Endothelial cell of umbilical vein (primary cell): ENCODE measurements at regions of chr15 and their contacts with region 1.

Region 1: GRCh38 chr15:66789029-66790025 is 87.3 kb downstream of the SMAD6 start:
- DNase-seq: peak; percentile 57
- H3K4me3 ChIP-seq: no peak overlapping the region
- H3K27ac ChIP-seq: no peak overlapping the region
- H3K4me1 ChIP-seq: no peaks in the 10 kb centered on the region
- H3K27me3 ChIP-seq: no peaks in the 10 kb centered on the region
- CTCF ChIP-seq: peak; percentile 54 to 67
- POLR2A ChIP-seq: no peak

Region 2: GRCh38 chr15:66429117-66429516 is 360.2 kb before region 1 on chr15:
- CTCF ChIA-PET with region 1: no interaction called
- POLR2A ChIA-PET with region 1: no interaction called
- dilution Hi-C with region 1: no loop called
- intact Hi-C with region 1: no loop called
- DNase-seq: no peak
- H3K4me3 ChIP-seq: no peak overlapping the region
- H3K27ac ChIP-seq: no peak overlapping the region
- H3K4me1 ChIP-seq: no peaks in the 10 kb centered on the region
- H3K27me3 ChIP-seq: no peaks in the 10 kb centered on the region
- CTCF ChIP-seq: no peak
- POLR2A ChIP-seq: no peak

Region 3: GRCh38 chr15:66692808-66693596 is 96.3 kb before region 1 on chr15:
- CTCF ChIA-PET with region 1: no interaction called
- POLR2A ChIA-PET with region 1: no interaction called
- dilution Hi-C with region 1: no loop called
- intact Hi-C with region 1: no loop called
- DNase-seq: no peak
- H3K4me3 ChIP-seq: no peak overlapping the region
- H3K27ac ChIP-seq: no peak overlapping the region
- H3K4me1 ChIP-seq: peaks cover 3% of the 10 kb centered on the region
- H3K27me3 ChIP-seq: no peaks in the 10 kb centered on the region
- CTCF ChIP-seq: no peak
- POLR2A ChIP-seq: no peak

Region 4: DNA sequence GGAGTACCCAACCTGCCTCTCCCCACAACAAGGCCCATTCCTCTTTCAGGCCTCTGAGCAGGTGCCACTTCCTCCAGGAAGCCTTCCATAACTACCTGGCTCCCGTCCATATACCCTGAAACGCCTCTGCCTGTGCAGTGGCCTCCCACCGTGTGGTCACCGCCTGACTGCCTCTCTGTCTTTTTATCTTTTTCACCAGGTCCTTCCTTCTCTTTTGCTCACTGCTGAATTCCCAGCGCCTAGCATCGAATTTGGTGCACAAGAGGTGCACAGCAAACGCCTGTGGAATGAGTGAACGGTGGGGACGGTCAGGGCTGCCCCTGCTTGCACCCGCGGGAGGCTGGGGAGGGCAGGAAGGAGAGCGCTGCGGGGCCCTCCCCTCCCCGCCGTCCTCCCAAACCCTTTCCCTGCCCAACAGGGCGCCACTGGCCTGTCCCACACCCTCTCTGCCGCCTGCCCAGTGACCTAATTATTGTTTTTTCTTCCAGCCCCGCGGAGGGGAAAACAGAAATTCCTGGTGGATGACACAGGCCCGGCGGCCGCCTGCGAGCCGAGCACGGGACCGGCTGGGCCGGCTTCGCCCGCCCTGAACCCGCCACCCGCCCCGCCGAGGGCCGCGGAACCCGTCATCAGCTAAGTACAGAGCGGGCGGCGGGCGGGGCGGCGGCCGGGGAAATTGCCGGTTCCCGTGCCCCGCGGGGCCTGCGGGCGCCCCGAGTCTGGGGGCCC is 52.8 kb after region 1 on chr15:
- CTCF ChIA-PET with region 1: interaction called, 223 read pairs
- POLR2A ChIA-PET with region 1: no interaction called
- dilution Hi-C with region 1: no loop called
- intact Hi-C with region 1: loop called (anchors 1 kb)
- DNase-seq: peak; percentile 93
- H3K4me3 ChIP-seq: peak overlapping the region in 2 of 3 experiments; percentile 45 to 50
- H3K27ac ChIP-seq: peak overlapping the region; percentile 89
- H3K4me1 ChIP-seq: peaks cover 15% of the 10 kb centered on the region
- H3K27me3 ChIP-seq: no peaks in the 10 kb centered on the region
- CTCF ChIP-seq: no peak
- POLR2A ChIP-seq: no peak

Region 5: DNA sequence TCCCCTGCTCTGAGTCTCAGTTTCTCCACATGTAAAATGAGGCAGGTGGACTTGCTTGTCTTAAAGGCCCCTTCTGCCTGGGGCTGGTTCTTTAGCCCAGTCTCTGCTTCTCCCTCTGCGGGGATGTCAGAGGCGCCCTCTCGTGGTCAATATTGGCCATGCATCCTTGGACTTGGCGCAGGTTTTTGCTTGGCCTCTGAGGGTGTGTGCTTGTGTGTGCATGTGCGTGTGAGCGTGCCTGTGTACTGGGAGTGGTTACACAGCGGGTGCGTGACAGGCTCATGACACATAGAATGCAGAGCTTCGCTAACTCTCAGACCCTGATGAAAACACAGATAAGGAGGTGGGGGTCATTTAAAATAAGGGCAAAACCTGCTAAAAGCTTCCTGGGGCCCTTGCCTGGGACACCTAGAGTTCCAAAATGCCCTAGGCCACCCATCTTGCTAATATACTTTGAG is 73.6 kb after region 1 on chr15:
- CTCF ChIA-PET with region 1: interaction called, 10 read pairs
- POLR2A ChIA-PET with region 1: no interaction called
- dilution Hi-C with region 1: no loop called
- intact Hi-C with region 1: no loop called
- DNase-seq: peak; percentile 85
- H3K4me3 ChIP-seq: no peak overlapping the region
- H3K27ac ChIP-seq: no peak overlapping the region
- H3K4me1 ChIP-seq: no peaks in the 10 kb centered on the region
- H3K27me3 ChIP-seq: no peaks in the 10 kb centered on the region
- CTCF ChIP-seq: peak; percentile 87 to 94
- POLR2A ChIP-seq: no peak